Prostate gland (tissue), 2 donors: ENCODE measurements at regions of chr7 and their contacts with region 1.

Region 1: GRCh38 chr7:842431-843031 is 10.3 kb downstream of the SUN1 start:
- DNase-seq: no peak
- H3K4me3 ChIP-seq: no peak overlapping the region
- H3K27ac ChIP-seq: no peak overlapping the region
- H3K4me1 ChIP-seq: no peaks in the 10 kb centered on the region
- H3K27me3 ChIP-seq: no peaks in the 10 kb centered on the region
- CTCF ChIP-seq: no peak
- POLR2A ChIP-seq: no peak

Region 2: DNA sequence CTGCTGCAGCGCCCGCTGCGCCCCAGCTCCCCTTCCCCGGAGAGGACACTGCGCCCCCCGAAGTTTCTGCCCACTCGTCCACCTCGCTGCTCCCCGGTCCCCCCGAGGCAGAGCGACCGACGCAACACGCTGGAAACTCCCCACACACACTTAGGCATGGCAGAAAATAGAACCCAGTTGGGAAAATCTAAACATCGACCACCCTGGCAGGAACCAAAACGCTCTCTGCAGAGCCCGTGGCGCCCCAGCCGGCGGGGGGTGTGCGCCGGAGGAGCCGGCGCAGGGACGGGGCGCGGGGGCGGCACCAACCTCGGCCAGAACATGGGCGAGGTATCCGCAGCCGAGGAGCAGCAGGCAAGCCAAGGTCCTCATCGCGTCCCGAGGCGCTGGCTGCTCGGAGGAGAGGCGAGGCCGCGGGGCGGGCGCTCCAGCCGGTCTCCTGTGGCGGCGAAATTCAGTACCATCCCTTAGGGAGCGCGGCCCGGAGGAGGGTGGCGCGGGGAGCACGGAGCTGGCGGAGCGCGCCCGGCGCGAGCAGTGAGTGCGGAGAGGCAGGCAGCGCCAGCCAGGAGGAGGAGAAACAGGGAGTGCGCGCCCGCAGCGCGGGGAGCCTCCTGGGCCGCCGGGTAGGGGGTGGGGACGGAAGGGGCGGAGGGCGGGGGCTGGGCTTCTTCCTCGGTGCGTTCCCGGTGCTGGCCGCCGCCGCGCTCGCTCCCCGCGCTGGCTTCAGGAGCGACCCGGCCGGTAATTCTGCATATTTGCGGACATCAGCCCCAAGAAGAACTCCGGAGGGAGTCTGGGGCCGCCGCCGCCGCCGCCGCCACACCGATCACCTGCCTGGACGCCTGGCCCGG is 323.7 kb before region 1 on chr7:
- intact Hi-C with region 1: loop called (anchors 10 kb)
- DNase-seq: peak; percentile 92
- H3K4me3 ChIP-seq: peak overlapping the region; percentile 74 to 86
- H3K27ac ChIP-seq: peak overlapping the region; percentile 83 to 90
- H3K4me1 ChIP-seq: peaks cover 29% of the 10 kb centered on the region
- H3K27me3 ChIP-seq: no peaks in the 10 kb centered on the region
- CTCF ChIP-seq: peak in 1 of 4 experiments; percentile 19
- POLR2A ChIP-seq: peak; percentile 89

Region 3: GRCh38 chr7:726084-726853 is 116.3 kb before region 1 on chr7 and contains the start of gene DNAAF5:
- intact Hi-C with region 1: no loop called
- DNase-seq: peak; percentile 82
- H3K4me3 ChIP-seq: peak within 1 kb of the TSS; percentile 73 to 90
- H3K27ac ChIP-seq: peak within 1 kb of the TSS; percentile 7 to 50
- H3K4me1 ChIP-seq: no peaks in the 10 kb centered on the region
- H3K27me3 ChIP-seq: no peaks in the 10 kb centered on the region
- CTCF ChIP-seq: no peak
- POLR2A ChIP-seq: peak; percentile 14
- total RNA-seq, gene DNAAF5: 30.8 to 52.0 TPM